ENCODE measurements at regions of chr1 and their contacts with region 1.

Region 1: GRCh38 chr1:198275597-198275996 is 118.8 kb downstream of the NEK7 start:
- DNase-seq: no peak
- H3K4me3 Mint-ChIP-seq: no peak overlapping the region
- H3K27ac Mint-ChIP-seq: no peak overlapping the region
- H3K4me1 Mint-ChIP-seq: peaks cover 27% of the 10 kb centered on the region
- H3K27me3 Mint-ChIP-seq: no peaks in the 10 kb centered on the region
- CTCF ChIP-seq: no peak

Region 2: DNA sequence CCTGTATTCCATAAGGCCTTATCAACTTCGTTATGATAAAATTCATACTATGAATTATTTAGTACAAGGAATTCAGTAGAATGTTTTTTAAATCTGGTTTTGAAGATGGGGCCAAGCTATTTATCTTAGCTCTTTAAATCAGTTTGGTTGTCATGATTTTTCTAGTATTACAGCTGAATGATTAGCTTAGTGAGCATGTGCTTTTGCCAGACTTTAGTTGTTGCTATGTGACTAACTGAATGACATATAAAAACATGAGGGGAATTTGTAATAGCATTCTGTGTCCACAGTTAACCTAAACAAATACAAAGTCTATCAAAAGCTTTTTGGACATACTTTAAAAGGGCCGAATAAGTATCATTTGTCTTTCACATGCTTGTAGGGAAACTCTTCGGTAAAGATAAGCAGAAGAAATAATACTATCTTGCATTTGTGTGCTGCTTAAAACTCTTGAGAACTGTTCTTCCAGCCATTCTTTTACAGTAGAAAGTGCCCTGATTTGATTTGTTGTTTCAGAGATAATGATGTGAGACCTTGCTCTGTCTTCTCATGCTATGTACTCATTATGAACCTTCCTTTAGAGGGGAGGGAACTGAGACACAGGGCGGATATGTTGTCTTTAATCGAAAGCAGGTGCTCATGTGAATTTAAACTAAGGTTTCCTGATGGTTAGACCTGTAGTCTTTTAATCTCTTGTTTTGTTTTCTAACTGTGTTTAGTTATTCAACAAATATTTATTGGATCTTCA is 100.0 kb before region 1 on chr1:
- CTCF ChIA-PET with region 1: no interaction called
- intact Hi-C with region 1: loop called (anchors 5 kb)
- DNase-seq: no peak
- H3K4me3 Mint-ChIP-seq: no peak overlapping the region
- H3K27ac Mint-ChIP-seq: no peak overlapping the region
- H3K4me1 Mint-ChIP-seq: peaks cover 89% of the 10 kb centered on the region
- H3K27me3 Mint-ChIP-seq: no peaks in the 10 kb centered on the region
- CTCF ChIP-seq: no peak

Region 3: DNA sequence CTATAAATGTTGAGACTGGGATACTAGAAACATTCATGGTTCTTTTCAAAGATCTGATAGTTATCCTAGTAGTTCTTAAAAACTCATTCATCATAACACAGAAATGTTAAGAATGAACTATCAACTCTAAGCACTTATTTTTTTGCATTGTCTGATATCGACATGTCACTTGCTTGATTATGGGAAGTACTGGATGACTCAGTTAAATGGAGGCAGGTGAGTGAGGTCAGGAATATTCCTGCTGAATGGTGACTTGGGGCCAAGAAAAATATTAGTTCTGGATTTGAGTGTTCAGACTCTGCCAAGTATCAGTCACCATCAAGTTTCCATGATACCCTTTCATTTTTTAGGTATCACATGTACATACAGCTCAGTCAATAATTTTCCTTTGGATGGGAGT is 55.2 kb before region 1 on chr1:
- CTCF ChIA-PET with region 1: interaction called, 3 read pairs
- intact Hi-C with region 1: loop called (anchors 5 kb)
- DNase-seq: peak; percentile 42
- H3K4me3 Mint-ChIP-seq: no peak overlapping the region
- H3K27ac Mint-ChIP-seq: peak overlapping the region; percentile 68
- H3K4me1 Mint-ChIP-seq: peaks cover 58% of the 10 kb centered on the region
- H3K27me3 Mint-ChIP-seq: no peaks in the 10 kb centered on the region
- CTCF ChIP-seq: no peak

Region 4: DNA sequence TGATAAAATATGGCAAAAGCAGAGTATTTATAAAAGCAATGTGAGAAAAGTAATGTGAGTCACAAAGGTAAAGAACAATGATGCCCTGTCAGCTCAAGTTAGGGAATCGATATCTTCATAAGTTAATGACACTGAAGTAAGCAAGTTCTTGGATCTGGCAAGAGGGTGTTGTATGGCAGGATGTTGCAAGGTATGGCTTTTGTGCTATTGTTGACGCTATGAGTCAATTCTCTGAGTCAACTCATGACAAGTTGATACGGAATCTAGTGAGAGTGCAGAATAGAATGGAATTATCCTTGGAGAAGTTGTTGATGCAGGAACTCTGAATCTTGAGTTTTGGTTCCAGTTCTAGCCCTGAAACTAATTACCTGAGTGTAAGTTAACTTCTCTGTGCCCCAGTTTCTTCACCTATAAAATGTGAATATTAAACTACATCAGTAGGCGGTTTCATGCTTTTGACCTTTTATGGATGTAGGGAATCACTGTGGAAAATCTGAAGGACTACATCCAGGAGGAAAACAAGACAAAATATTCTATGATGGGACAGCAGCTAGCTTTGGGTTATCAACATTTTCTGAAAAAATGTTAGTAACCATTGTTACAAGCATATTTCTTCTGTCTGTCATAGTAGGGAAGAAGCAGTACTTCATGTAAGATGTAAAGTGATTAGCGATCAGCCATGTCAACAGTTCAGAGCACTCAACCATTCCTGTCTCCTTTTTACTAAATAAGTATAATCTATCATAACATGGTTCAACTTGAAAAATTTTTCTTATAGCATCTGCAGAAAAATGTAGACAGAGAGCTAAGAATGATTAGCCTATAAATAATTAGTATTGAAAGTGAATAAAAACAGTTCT is 168.0 kb after region 1 on chr1:
- CTCF ChIA-PET with region 1: no interaction called
- intact Hi-C with region 1: loop called (anchors 10 kb)
- DNase-seq: peak; percentile 76
- H3K4me3 Mint-ChIP-seq: peak overlapping the region; percentile 50
- H3K27ac Mint-ChIP-seq: peak overlapping the region; percentile 97
- H3K4me1 Mint-ChIP-seq: peaks cover 59% of the 10 kb centered on the region
- H3K27me3 Mint-ChIP-seq: no peaks in the 10 kb centered on the region
- CTCF ChIP-seq: no peak

Measured in Calu3 (cell line).